ENCODE measurements at regions of chr3 and their contacts with region 1.

Region 1: GRCh38 chr3:103752986-103753385 is 1318.2 kb downstream of the ZPLD1 start:
- DNase-seq: peak in 1 of 2 experiments; percentile 16
- H3K4me3 ChIP-seq: no peak overlapping the region
- H3K27ac ChIP-seq: no peak overlapping the region
- H3K4me1 ChIP-seq: no peaks in the 10 kb centered on the region
- H3K27me3 ChIP-seq: no peaks in the 10 kb centered on the region
- CTCF ChIP-seq: no peak

Region 2: DNA sequence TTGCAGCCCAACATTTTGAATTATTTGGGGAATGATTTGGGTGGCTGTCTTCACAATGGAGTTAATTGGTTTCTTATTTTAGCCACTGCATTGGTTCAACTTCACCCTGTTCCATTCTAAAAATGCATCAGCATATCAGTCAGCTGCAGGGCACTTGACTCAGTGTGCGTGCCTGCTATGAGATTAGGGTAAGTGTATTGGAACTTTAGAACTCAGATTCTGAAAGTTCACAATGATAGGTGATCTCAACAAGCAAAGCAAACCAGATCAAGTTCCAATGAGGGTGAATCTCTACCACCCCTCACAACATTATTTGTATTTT is 1053.2 kb before region 1 on chr3:
- CTCF ChIA-PET with region 1: no interaction called
- POLR2A ChIA-PET with region 1: interaction called, 16 read pairs
- intact Hi-C with region 1: no loop called
- DNase-seq: no peak
- H3K4me3 ChIP-seq: no peak overlapping the region
- H3K27ac ChIP-seq: no peak overlapping the region
- H3K4me1 ChIP-seq: no peaks in the 10 kb centered on the region
- H3K27me3 ChIP-seq: no peaks in the 10 kb centered on the region
- CTCF ChIP-seq: no peak

Region 3: DNA sequence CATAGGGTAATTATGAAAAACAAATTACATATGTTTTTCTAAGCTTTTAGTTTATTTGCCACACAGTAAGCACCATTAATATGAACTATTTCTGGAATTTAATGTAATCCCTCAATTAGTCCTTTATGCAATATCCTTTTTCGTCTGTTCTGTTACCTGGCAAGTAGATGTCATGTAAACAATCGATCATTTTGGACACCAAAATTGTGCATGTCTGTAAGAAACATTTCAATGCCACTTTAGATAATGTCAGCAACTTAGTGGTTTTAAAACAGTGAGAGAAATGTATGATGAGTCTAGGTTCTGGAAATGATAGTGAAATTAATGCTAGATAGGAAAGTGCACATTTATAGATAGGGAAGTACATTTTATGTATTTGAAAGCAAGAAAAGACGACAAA is 331.5 kb before region 1 on chr3:
- CTCF ChIA-PET with region 1: no interaction called
- POLR2A ChIA-PET with region 1: no interaction called
- intact Hi-C with region 1: loop called (anchors 5 kb)
- DNase-seq: no peak
- H3K4me3 ChIP-seq: no peak overlapping the region
- H3K27ac ChIP-seq: no peak overlapping the region
- H3K4me1 ChIP-seq: no peaks in the 10 kb centered on the region
- H3K27me3 ChIP-seq: no peaks in the 10 kb centered on the region
- CTCF ChIP-seq: no peak

Region 4: DNA sequence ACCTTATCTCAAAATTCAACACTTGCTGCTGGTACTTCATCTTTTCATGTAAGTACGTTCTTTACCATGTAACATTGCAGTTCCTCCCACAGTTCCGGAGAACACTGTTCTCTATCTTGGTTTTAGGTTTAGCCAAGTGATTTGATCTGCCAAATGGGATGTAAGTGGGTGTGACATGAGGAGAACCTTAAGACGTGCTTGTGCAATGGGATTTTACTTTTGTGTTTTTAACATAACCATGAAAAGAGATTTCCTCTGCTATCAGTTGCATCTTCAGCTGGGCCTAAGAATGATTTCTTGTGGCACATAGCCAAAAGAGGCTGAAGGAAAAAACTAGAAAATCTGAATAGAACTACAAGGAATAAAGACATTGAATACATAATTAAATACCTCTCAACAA is 719.2 kb after region 1 on chr3:
- CTCF ChIA-PET with region 1: interaction called, 10 read pairs
- POLR2A ChIA-PET with region 1: no interaction called
- intact Hi-C with region 1: no loop called
- DNase-seq: no peak
- H3K4me3 ChIP-seq: no peak overlapping the region
- H3K27ac ChIP-seq: no peak overlapping the region
- H3K4me1 ChIP-seq: no peaks in the 10 kb centered on the region
- H3K27me3 ChIP-seq: no peaks in the 10 kb centered on the region
- CTCF ChIP-seq: no peak